A549 (cell line): ENCODE measurements at regions of chr15 and their contacts with region 1.

Region 1: GRCh38 chr15:64731012-64731806 is 44.2 kb downstream of the RBPMS2 start:
- DNase-seq: peak; percentile 77 to 83
- ATAC-seq: peak; percentile 88 to 91
- H3K4me3 ChIP-seq: no peak overlapping the region
- H3K27ac ChIP-seq: no peak overlapping the region
- H3K4me1 ChIP-seq: peaks cover 9% of the 10 kb centered on the region
- CTCF ChIP-seq: peak; percentile 99
- EP300 ChIP-seq: no peak
- POLR2A ChIP-seq: no peak
- RAD21 ChIP-seq: peak; percentile 99 to 100

Region 2: DNA sequence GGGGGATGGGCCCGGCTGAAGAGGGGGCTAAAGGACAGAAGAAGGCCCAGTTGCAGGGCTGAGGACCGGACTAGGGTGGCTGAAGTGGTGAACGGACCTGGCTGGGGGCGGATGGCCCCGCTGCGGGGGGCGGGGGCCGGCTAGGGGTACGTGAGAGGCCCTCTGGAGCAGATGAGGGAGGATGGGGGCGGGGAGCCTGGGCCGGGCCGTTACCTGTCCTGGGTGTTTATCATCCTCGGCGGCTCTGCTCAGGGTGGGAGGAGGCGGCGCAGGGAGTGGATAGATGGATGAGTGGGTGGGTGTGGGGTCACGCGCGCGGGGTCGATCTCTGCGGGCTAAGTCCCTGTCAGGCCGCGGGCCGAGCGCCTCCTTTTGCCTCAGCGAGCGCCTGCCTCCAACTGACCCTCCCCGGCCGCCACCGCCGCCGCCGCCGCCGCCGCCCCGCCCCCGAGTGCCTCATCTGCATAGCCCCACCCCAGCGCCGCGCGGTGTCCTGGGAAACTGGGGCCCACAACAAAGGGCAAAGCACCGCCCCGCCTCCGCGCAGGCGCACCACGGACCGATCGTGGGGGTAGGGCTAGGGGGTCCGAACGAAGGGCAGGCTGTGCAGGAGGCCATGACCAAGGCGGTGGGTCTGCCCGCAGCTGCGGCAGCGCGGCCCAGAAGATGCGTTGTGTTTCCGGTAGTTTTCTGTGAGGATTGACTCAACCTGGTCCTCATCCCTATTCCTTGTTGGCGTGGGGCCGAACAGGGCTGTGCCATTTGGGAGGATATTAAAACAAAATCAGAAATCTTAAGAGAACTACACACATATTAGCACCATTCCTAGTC is 28.2 kb before region 1 on chr15:
- CTCF ChIA-PET with region 1: interaction called, 1,052 read pairs
- POLR2A ChIA-PET with region 1: no interaction called
- DNase-seq: peak; percentile 93 to 98
- ATAC-seq: peak; percentile 93 to 95
- H3K4me3 ChIP-seq: peak overlapping the region; percentile 75
- H3K27ac ChIP-seq: peak overlapping the region; percentile 88 to 94
- H3K4me1 ChIP-seq: peaks cover 46% of the 10 kb centered on the region
- CTCF ChIP-seq: peak; percentile 10; the same call in 1 of the 3 replicates
- EP300 ChIP-seq: no peak; a peak in 1 of 5 replicates
- POLR2A ChIP-seq: peak; percentile 98
- RAD21 ChIP-seq: no peak

Region 3: DNA sequence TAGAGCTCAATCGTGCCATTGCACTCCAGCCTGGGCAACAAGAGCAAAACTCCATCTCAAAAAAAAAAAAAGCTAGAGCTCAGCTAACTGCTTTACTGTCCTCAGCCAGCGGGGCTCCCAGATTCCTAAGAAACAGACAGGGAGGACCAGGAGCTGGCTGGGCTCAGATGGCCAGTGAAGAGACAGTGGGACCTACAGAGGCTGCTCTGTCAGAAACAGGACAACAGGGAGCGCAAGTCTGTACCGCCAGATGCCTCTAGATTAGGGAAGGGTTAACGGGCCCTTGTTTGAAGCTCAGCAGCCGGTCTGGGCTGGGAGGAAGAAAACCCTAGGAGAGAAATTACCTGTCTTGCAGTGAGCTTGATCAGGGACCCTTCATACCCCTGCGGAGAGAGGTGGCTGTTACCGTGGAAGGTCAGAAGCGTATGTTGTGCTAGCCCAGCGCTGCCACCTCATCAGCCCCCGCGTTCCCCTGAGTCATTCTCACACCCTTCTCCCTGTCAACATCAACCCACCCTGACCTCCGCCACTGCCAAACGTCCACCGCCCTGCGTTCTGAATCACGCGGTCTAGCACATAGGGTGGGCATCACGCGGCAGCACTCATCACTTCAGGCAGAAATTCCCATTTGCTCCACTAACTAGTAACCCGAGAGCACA is 18.9 kb after region 1 on chr15:
- CTCF ChIA-PET with region 1: interaction called, 35 read pairs
- POLR2A ChIA-PET with region 1: no interaction called
- DNase-seq: peak; percentile 38 to 63
- ATAC-seq: peak; percentile 83 to 91; a peak in 5 of 6 replicates
- H3K4me3 ChIP-seq: no peak overlapping the region
- H3K27ac ChIP-seq: no peak overlapping the region
- H3K4me1 ChIP-seq: no peaks in the 10 kb centered on the region
- CTCF ChIP-seq: no peak
- EP300 ChIP-seq: no peak
- POLR2A ChIP-seq: no peak
- RAD21 ChIP-seq: no peak

Region 4: DNA sequence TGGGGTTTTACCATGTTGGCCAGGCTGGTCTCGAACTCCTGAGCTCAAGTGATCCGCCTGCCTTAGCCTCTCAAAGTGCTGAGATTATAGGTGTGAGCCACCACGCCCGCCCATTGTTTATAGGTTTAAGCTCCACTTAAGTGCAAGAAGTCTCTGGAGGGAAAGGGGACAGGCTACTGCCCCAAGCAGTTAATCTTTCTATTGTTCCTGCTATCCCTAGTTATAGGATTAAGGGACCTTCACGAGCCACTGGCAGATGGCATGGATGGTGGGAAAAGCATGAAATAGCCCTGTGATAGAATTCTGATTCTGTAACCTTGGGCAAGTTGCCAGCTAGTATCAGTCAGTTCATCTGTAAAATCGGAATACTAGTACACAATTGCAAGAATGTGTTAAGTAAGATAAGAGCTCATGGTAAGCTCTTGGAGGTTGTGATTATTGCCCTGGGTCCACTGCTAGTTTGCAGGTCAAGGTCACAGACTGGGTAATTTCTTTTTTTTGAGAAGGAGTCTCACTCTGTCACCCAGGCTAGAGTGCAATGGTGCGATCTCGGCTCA is 49.5 kb after region 1 on chr15:
- CTCF ChIA-PET with region 1: interaction called, 74 read pairs
- POLR2A ChIA-PET with region 1: no interaction called
- DNase-seq: no peak
- ATAC-seq: no peak
- H3K4me3 ChIP-seq: no peak overlapping the region
- H3K27ac ChIP-seq: no peak overlapping the region
- H3K4me1 ChIP-seq: peaks cover 6% of the 10 kb centered on the region
- CTCF ChIP-seq: no peak
- EP300 ChIP-seq: no peak
- POLR2A ChIP-seq: no peak
- RAD21 ChIP-seq: no peak

Region 5: DNA sequence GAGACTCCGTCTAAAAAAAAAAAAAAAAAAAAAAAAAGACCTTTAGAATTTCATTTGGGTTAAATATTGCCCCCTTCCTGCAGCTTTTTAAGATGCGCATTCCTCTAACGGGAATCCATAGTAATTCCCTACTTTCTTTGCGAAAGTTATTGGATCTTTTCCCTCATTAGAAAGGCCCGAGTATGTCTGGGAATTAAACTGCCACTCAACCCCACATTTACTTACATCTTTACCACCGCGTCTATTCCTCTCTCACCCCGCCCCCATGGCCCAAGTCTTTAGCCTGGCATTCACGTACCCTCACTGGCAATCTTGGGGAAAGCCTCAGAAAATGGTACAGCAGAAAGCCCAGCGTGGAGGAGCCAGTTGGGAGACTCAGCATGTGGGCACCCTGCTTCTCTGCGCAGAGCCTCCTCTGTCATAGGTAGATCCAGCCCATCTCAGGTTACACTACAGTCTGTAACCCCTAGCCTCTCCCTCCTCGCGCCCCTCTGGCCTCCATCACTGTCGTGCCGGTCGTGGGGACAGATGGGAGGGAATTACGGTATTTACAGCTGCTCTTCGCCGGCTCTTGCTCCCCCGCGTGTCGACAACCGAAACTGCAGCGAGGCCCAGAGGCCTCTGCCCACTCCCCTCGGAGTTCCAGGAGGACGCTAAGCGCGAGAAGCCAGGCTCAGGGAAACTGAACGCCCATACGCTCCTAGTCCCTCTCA is 174.1 kb after region 1 on chr15:
- CTCF ChIA-PET with region 1: interaction called, 25 read pairs
- POLR2A ChIA-PET with region 1: no interaction called
- DNase-seq: peak; percentile 70 to 79
- ATAC-seq: peak; percentile 90 to 92
- H3K4me3 ChIP-seq: 0 out of 3 replicates have a peak overlapping the region, but pooled peaks have one; percentile 1
- H3K27ac ChIP-seq: peak overlapping the region; percentile 14 to 55; a peak in 3 of 6 replicates
- H3K4me1 ChIP-seq: no peaks in the 10 kb centered on the region
- CTCF ChIP-seq: peak; percentile 42
- EP300 ChIP-seq: no peak
- POLR2A ChIP-seq: no peak
- RAD21 ChIP-seq: peak; percentile 57 to 58